ENCODE measurements at regions of chr20 and their contacts with region 1.

Region 1: DNA sequence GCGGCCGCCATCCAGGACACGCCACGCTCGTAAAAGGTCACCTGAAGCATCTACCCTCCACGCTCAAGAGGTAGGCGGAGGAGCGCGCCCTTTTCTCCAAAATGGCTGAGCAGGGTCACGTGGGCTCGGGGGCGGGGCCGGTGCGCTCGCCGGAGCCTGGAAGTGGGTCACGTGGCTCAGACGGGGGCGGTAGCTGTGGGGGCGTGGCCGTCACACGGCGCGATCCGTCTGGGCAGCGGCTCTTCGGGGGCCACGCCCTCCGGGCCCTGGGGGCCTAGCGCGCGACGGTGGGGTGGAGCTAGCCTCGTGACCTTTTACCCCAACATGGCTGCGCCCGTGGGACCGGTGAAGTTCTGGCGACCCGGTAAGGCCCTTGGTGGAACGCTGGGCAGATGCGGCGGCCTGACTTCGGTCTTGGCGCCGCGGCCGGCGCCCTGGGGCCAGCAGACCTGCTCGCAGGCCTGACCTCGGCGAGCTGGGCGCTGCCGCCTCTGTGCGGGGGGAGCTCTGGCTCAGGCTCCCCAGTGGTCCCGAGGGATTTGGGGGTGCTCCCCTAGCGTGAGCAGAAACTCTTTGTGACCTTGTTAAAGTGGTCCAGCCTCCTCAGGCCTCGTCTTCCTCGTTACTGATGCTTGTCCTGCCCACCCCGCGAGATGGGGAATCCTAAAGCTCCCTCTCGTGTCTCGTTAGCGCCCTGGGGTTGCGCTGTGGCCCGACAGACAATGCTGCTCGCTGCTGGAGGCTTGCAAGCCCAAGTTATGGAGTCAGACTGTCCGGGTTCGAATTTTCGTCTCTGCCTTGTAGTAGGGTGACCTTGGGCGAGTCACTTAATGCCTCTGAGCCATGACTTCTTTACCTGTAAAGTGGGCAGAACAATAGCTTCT is at the start of gene DHX35:
- DNase-seq: peak; percentile 97
- ATAC-seq: peak; percentile 98
- H3K4me3 ChIP-seq: peak within 1 kb of the TSS; percentile 86 to 95 (median 95)
- H3K27ac ChIP-seq: peak within 1 kb of the TSS; percentile 89
- H3K4me1 ChIP-seq: peaks cover 34% of the 10 kb centered on the region
- H3K27me3 ChIP-seq: no peaks in the 10 kb centered on the region; a peak in 1 of 5 replicates
- CTCF ChIP-seq: peak; percentile 86
- EP300 ChIP-seq: peak in 1 of 2 experiments; percentile 14; a peak in 2 of 4 replicates
- POLR2A ChIP-seq: peak; percentile 79 to 96
- RAD21 ChIP-seq: peak; percentile 74
- total RNA-seq, gene DHX35: 28.7 and 30.4 TPM in 2 replicates

Region 2: DNA sequence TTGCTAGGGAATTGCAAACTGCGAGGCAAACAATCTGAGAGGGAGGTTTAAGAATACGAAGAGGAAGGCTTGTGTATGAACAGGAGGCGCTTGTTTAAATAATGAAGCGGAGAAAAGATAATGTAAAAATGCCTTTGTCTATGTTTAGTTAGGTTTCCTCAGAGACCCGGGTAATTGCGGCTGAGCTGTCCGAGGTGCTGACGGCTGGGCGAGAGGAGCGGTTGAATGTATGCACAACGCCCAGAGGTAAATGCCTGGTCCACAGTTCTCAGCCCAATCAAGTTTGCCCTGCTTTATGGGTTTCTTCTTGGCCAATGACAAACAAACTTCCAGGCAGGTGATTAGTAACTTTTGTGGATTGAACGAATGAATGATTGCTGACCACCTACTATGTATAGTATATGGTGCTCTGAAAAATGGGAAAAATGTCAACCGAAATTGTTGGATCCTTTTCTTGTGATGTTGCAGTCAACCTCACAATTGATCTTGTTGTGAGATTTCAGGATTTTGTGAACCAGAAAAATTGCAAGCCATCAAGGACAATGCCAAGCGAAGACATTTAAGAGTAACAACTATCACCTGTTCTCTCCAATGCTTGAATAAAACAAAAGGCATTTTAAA is 276.3 kb before region 1 on chr20:
- CTCF ChIA-PET with region 1: no interaction called
- POLR2A ChIA-PET with region 1: no interaction called
- in situ Hi-C with region 1: no loop called
- intact Hi-C with region 1: no loop called
- DNase-seq: peak; percentile 63
- ATAC-seq: peak; percentile 90
- H3K4me3 ChIP-seq: no peak overlapping the region
- H3K27ac ChIP-seq: no peak overlapping the region
- H3K4me1 ChIP-seq: no peaks in the 10 kb centered on the region
- H3K27me3 ChIP-seq: no peaks in the 10 kb centered on the region
- CTCF ChIP-seq: 0 out of 2 replicates have a peak, but pooled peaks have one; percentile 9
- EP300 ChIP-seq: no peak
- POLR2A ChIP-seq: no peak
- RAD21 ChIP-seq: peak; percentile 29; the same call in 1 of the 2 replicates

Region 3: GRCh38 chr20:38926142-38926933 is 35.9 kb before region 1 on chr20 and contains the start of gene FAM83D:
- CTCF ChIA-PET with region 1: interaction called, 6 read pairs
- POLR2A ChIA-PET with region 1: interaction called, 41 read pairs
- in situ Hi-C with region 1: no loop called
- intact Hi-C with region 1: loop called (anchors 1 kb)
- DNase-seq: peak; percentile 99
- ATAC-seq: peak; percentile 93
- H3K4me3 ChIP-seq: peak within 1 kb of the TSS; percentile 85 to 99 (median 95)
- H3K27ac ChIP-seq: peak within 1 kb of the TSS; percentile 73
- H3K4me1 ChIP-seq: peaks cover 57% of the 10 kb centered on the region
- H3K27me3 ChIP-seq: peaks cover 0 to 8% of the 10 kb centered on the region in 2 experiments; a peak in 2 of 5 replicates
- CTCF ChIP-seq: no peak
- EP300 ChIP-seq: peak in 1 of 2 experiments; percentile 40; a peak in 2 of 4 replicates
- POLR2A ChIP-seq: peak; percentile 100
- RAD21 ChIP-seq: peak; percentile 99
- total RNA-seq, gene FAM83D: 64.0 and 76.5 TPM in 2 replicates

Region 4: DNA sequence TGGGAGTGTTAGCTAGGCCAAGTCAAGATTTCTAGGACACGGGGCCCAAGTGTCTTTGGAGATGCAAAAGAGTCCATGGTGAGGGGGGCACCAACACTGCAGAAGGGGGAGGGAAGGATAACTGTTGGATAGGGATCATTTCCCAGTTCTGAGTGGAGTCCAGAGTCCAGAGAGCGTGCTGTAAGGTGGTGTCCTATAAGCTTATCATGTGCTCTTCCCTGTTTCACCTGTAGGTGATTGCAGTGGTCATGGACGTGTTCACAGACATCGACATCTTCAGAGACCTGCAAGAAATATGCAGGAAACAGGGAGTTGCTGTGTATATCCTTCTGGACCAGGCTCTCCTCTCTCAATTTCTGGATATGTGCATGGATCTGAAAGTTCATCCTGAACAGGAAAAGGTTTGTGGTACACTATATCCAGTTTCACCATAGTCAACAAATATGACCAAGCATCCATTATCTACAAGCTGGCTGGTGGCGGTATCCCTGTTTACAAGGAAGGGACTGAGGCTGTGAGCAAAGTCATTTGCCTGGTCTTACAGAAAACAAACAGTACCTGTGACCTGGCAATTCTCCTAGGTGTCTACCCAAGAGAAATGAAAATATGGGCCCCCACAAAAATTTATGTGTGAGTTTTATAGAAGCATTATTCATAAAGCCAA is 20.4 kb before region 1 on chr20:
- CTCF ChIA-PET with region 1: no interaction called
- POLR2A ChIA-PET with region 1: interaction called, 15 read pairs
- in situ Hi-C with region 1: no loop called
- intact Hi-C with region 1: no loop called
- DNase-seq: peak; percentile 63
- ATAC-seq: peak; percentile 86
- H3K4me3 ChIP-seq: no peak overlapping the region
- H3K27ac ChIP-seq: peak overlapping the region; percentile 39
- H3K4me1 ChIP-seq: peaks cover 55% of the 10 kb centered on the region
- H3K27me3 ChIP-seq: no peaks in the 10 kb centered on the region
- CTCF ChIP-seq: peak; percentile 30; the same call in 1 of the 2 replicates
- EP300 ChIP-seq: no peak
- POLR2A ChIP-seq: peak in 1 of 2 experiments; percentile 22; a peak in 1 of 4 replicates
- RAD21 ChIP-seq: no peak

Region 5: GRCh38 chr20:39010496-39010895 is 48.2 kb after region 1 on chr20:
- CTCF ChIA-PET with region 1: no interaction called
- POLR2A ChIA-PET with region 1: interaction called, 6 read pairs
- in situ Hi-C with region 1: no loop called
- intact Hi-C with region 1: loop called (anchors 5 kb)
- DNase-seq: no peak
- ATAC-seq: no peak
- H3K4me3 ChIP-seq: no peak overlapping the region
- H3K27ac ChIP-seq: no peak overlapping the region
- H3K4me1 ChIP-seq: peaks cover 22% of the 10 kb centered on the region
- H3K27me3 ChIP-seq: no peaks in the 10 kb centered on the region
- CTCF ChIP-seq: no peak
- EP300 ChIP-seq: no peak
- POLR2A ChIP-seq: no peak
- RAD21 ChIP-seq: no peak

Region 6: GRCh38 chr20:39070484-39071231 is 108.4 kb after region 1 on chr20:
- CTCF ChIA-PET with region 1: no interaction called
- POLR2A ChIA-PET with region 1: no interaction called
- in situ Hi-C with region 1: no loop called
- intact Hi-C with region 1: no loop called
- DNase-seq: peak; percentile 71
- ATAC-seq: peak; percentile 70
- H3K4me3 ChIP-seq: peak overlapping the region in 1 of 3 experiments; percentile 13; a peak in 1 of 6 replicates
- H3K27ac ChIP-seq: peak overlapping the region; percentile 6
- H3K4me1 ChIP-seq: peaks cover 29% of the 10 kb centered on the region
- H3K27me3 ChIP-seq: peaks cover 3 to 22% of the 10 kb centered on the region in 2 experiments; a peak in 3 of 5 replicates
- CTCF ChIP-seq: no peak
- EP300 ChIP-seq: peak in 1 of 2 experiments; percentile 62; a peak in 1 of 4 replicates
- POLR2A ChIP-seq: no peak
- RAD21 ChIP-seq: no peak